MCF 10A (cell line): ENCODE measurements at regions of chrX and their contacts with region 1.

Region 1: DNA sequence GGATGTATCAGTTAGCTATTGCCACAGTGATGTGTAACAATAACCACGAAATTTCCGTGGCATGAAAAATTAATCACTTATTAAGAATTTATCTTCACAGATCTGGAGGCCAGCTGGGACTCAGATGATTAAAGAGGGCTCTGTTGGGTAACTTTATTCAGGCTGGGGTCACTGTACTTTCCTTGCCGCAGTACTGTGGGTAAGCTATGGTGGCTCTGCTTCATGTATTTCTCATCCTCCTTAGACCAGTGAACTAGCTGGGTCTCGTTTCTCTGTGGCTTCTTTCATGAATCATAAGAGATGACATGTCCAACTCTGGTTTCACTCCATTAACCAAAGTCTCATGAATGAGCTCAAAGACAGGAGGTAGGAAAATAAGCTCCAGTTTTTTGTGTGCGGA is 13.5 kb downstream of the TEX13B start:
- DNase-seq: no peak
- H3K4me3 Mint-ChIP-seq: no peak overlapping the region
- H3K27ac Mint-ChIP-seq: no peak overlapping the region
- H3K4me1 Mint-ChIP-seq: no peaks in the 10 kb centered on the region
- H3K27me3 Mint-ChIP-seq: peaks cover 42% of the 10 kb centered on the region
- CTCF ChIP-seq: no peak

Region 2: GRCh38 chrX:107978707-107979307 is 10.2 kb after region 1 on chrX:
- CTCF ChIA-PET with region 1: interaction called, 10 read pairs
- POLR2A ChIA-PET with region 1: no interaction called
- intact Hi-C with region 1: no loop called
- DNase-seq: peak; percentile 59
- H3K4me3 Mint-ChIP-seq: no peak overlapping the region
- H3K27ac Mint-ChIP-seq: peak overlapping the region; percentile 11
- H3K4me1 Mint-ChIP-seq: no peaks in the 10 kb centered on the region
- H3K27me3 Mint-ChIP-seq: peaks cover 74% of the 10 kb centered on the region
- CTCF ChIP-seq: peak; percentile 61